SK-N-SH (cell line): ENCODE measurements at regions of chr7 and their contacts with region 1.

Region 1: GRCh38 chr7:4631664-4632171 is 50.4 kb upstream of the FOXK1 start:
- DNase-seq: peak; percentile 88
- H3K4me3 ChIP-seq: peak overlapping the region in 1 of 2 experiments; percentile 29; a peak in 1 of 4 replicates
- H3K27ac ChIP-seq: no peak overlapping the region
- H3K4me1 ChIP-seq: peaks cover 0 to 5% of the 10 kb centered on the region in 2 experiments; a peak in 1 of 4 replicates
- H3K27me3 ChIP-seq: no peaks in the 10 kb centered on the region
- CTCF ChIP-seq: peak; percentile 74
- EP300 ChIP-seq: no peak
- RAD21 ChIP-seq: peak; percentile 95

Region 2: GRCh38 chr7:4610768-4611467 is 20.8 kb before region 1 on chr7:
- CTCF ChIA-PET with region 1: interaction called, 44 read pairs
- POLR2A ChIA-PET with region 1: no interaction called
- DNase-seq: peak; percentile 77
- H3K4me3 ChIP-seq: no peak overlapping the region
- H3K27ac ChIP-seq: no peak overlapping the region
- H3K4me1 ChIP-seq: no peaks in the 10 kb centered on the region
- H3K27me3 ChIP-seq: no peaks in the 10 kb centered on the region
- CTCF ChIP-seq: peak; percentile 93
- EP300 ChIP-seq: no peak
- RAD21 ChIP-seq: peak; percentile 95

Region 3: DNA sequence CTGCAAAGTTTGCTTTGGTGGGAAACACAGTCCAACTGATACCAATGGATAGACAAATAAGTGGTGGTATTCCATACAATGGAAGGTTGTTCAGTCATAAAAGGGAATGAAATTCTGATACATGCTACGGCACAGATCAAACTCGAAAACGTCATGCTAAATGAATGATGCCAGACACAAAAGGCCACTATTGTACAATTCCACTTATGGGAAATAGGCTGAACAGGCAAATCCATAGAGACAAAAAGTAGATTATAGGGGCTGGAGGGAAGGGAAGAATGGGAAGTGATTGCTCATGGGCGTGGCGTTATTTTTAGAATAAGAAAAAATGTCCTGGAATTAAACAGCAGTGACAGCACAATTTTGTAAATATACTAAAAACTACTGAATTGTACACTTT is 15.6 kb before region 1 on chr7:
- CTCF ChIA-PET with region 1: interaction called, 44 read pairs
- POLR2A ChIA-PET with region 1: no interaction called
- DNase-seq: no peak
- H3K4me3 ChIP-seq: no peak overlapping the region
- H3K27ac ChIP-seq: no peak overlapping the region
- H3K4me1 ChIP-seq: no peaks in the 10 kb centered on the region
- H3K27me3 ChIP-seq: no peaks in the 10 kb centered on the region
- CTCF ChIP-seq: no peak
- EP300 ChIP-seq: no peak
- RAD21 ChIP-seq: no peak

Region 4: DNA sequence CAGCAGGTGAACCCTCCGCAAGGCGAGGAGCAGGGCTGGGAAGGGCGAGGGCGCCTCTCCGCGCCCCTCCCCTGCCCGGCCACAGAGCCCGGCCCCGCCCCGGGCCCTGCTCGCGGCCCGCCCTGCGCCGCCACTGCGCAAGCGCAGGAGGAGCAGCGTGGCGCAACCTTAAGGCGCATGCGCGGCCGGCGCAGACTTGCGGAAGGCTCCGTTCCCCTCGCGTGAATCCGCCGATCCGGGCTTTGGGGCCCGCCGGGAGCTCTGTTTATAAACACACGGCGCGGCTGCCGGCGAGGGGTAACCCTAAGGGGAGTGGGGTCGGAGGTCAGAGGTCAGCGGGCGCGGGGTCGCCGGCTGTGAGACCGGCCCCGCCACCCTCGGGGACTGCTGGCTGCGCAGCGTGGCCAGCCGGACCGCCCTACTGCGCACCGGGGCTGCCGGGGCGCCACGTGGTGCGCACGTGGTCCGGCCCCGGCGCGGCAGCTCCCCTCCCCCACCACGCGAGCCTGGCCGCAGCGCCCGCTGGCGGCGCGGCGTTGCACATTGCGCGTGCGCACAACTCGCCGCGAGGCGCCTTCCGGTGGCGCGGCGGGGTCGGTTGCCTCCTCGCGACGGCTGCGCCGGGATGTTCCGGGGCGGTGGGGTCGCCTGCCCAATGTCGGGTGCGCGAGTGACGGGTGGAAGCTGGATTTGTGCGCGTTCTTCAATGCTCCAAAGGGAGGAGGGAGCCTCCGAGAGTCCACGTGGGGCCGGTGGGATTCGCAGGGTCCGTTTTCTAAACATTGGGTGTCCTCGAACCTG is 10.1 kb after region 1 on chr7:
- CTCF ChIA-PET with region 1: interaction called, 22 read pairs
- POLR2A ChIA-PET with region 1: interaction called, 5 read pairs
- DNase-seq: peak; percentile 100
- H3K4me3 ChIP-seq: peak overlapping the region; percentile 60 to 72
- H3K27ac ChIP-seq: peak overlapping the region; percentile 72 to 78
- H3K4me1 ChIP-seq: no peaks in the 10 kb centered on the region; a peak in 1 of 4 replicates
- H3K27me3 ChIP-seq: no peaks in the 10 kb centered on the region
- CTCF ChIP-seq: peak; percentile 48
- EP300 ChIP-seq: peak in 1 of 2 experiments; percentile 48; a peak in 1 of 4 replicates
- RAD21 ChIP-seq: peak; percentile 25; the same call in 1 of the 2 replicates

Region 5: GRCh38 chr7:4753711-4754432 is 122.2 kb after region 1 on chr7:
- CTCF ChIA-PET with region 1: interaction called, 19 read pairs
- POLR2A ChIA-PET with region 1: no interaction called
- DNase-seq: peak; percentile 95
- H3K4me3 ChIP-seq: peak overlapping the region in 1 of 2 experiments; percentile 42; a peak in 1 of 4 replicates
- H3K27ac ChIP-seq: no peak overlapping the region
- H3K4me1 ChIP-seq: no peaks in the 10 kb centered on the region; a peak in 1 of 4 replicates
- H3K27me3 ChIP-seq: no peaks in the 10 kb centered on the region
- CTCF ChIP-seq: peak; percentile 98
- EP300 ChIP-seq: no peak
- RAD21 ChIP-seq: peak; percentile 88